H1 (cell line): ENCODE measurements at regions of chr14 and their contacts with region 1.

Region 1: GRCh38 chr14:73295198-73295796 is 58.0 kb downstream of the PAPLN start:
- DNase-seq: no peak
- H3K4me3 ChIP-seq: no peak overlapping the region
- H3K27ac ChIP-seq: no peak overlapping the region
- H3K4me1 ChIP-seq: peaks cover 0 to 3% (median 1%) of the 10 kb centered on the region in 4 experiments; a peak in 2 of 7 replicates
- H3K27me3 ChIP-seq: no peaks in the 10 kb centered on the region
- CTCF ChIP-seq: peak in 2 of 3 experiments; percentile 31 to 65; a peak in 2 of 4 replicates
- EP300 ChIP-seq: no peak
- POLR2A ChIP-seq: no peak
- RAD21 ChIP-seq: peak; percentile 40 to 48

Region 2: GRCh38 chr14:72864712-72865365 is 430.5 kb before region 1 on chr14:
- CTCF ChIA-PET with region 1: no interaction called
- POLR2A ChIA-PET with region 1: no interaction called
- DNase-seq: no peak
- H3K4me3 ChIP-seq: no peak overlapping the region
- H3K27ac ChIP-seq: no peak overlapping the region
- H3K4me1 ChIP-seq: no peaks in the 10 kb centered on the region
- H3K27me3 ChIP-seq: no peaks in the 10 kb centered on the region; a peak in 1 of 7 replicates
- CTCF ChIP-seq: no peak
- EP300 ChIP-seq: no peak
- POLR2A ChIP-seq: no peak
- RAD21 ChIP-seq: no peak

Region 3: DNA sequence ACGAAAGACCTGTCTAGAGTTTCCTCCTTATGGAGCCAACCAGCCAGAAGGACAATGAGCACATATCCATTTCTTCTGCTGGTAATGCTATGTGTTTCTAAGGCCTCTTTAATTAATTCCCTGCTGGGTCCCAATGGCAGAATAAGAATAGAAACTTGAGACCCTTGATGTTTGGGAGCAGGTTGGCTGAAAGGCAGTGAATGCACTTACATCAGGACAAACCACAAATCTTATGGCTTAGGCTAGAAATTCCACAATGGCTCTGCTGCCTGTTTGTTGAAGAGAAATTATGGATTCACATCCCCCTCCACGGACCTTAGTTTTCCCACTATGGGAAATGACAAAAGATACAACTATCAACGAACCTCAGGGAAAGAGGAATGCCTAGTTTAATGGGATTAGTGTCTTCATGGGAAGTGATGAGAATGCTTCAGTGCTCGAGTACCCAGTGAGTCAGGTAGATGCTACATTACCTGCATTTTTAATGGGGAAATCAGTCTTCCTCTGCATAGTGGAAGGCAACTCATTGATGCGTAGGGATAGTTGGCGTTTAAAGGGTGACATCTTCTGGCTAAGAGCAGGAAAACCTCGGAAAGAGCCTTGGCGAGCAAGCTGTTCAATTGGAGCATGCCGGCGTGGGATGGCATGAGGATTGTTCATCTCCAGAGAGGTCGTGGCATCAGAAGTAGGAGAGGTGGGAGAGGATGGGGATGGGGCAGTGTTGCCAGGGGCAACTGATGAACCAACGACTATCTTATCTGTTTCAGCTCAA is 11.5 kb before region 1 on chr14:
- CTCF ChIA-PET with region 1: interaction called, 26 read pairs
- POLR2A ChIA-PET with region 1: interaction called, 8 read pairs
- DNase-seq: peak in 1 of 2 experiments; percentile 44
- H3K4me3 ChIP-seq: peak overlapping the region in 1 of 4 experiments; percentile 8; a peak in 1 of 8 replicates
- H3K27ac ChIP-seq: no peak overlapping the region
- H3K4me1 ChIP-seq: peaks cover 3 to 28% (median 19%) of the 10 kb centered on the region in 4 experiments
- H3K27me3 ChIP-seq: no peaks in the 10 kb centered on the region
- CTCF ChIP-seq: peak; percentile 12 to 75 (median 59)
- EP300 ChIP-seq: no peak
- POLR2A ChIP-seq: no peak
- RAD21 ChIP-seq: peak; percentile 79 to 82

Region 4: GRCh38 chr14:73305499-73305898 is 10.2 kb after region 1 on chr14:
- CTCF ChIA-PET with region 1: interaction called, 11 read pairs
- POLR2A ChIA-PET with region 1: no interaction called
- DNase-seq: no peak
- H3K4me3 ChIP-seq: no peak overlapping the region
- H3K27ac ChIP-seq: no peak overlapping the region
- H3K4me1 ChIP-seq: no peaks in the 10 kb centered on the region
- H3K27me3 ChIP-seq: no peaks in the 10 kb centered on the region
- CTCF ChIP-seq: no peak
- EP300 ChIP-seq: no peak
- POLR2A ChIP-seq: no peak
- RAD21 ChIP-seq: no peak

Region 5: DNA sequence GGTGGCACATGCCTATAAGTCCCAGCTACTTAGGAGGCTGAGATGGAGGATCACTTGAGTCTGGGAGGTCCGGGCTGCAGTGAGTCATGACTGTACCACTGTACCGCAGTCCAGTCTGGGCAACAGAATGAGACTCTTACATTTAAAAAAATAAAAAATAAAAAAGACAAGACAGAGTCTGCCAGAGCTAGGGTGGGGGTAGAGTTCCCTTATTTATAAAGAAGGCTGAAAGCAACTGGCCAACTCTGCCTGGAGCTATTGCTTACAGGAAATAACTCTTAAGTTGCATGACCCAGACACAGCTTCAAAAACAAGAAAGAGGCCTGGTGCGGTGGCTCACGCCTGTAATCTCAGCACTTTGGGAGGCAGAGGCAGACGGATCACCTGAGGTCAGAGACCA is 131.6 kb after region 1 on chr14:
- CTCF ChIA-PET with region 1: no interaction called
- POLR2A ChIA-PET with region 1: no interaction called
- DNase-seq: no peak
- H3K4me3 ChIP-seq: no peak overlapping the region
- H3K27ac ChIP-seq: no peak overlapping the region
- H3K4me1 ChIP-seq: no peaks in the 10 kb centered on the region
- H3K27me3 ChIP-seq: no peaks in the 10 kb centered on the region
- CTCF ChIP-seq: no peak
- EP300 ChIP-seq: no peak
- POLR2A ChIP-seq: no peak
- RAD21 ChIP-seq: no peak

Region 6: DNA sequence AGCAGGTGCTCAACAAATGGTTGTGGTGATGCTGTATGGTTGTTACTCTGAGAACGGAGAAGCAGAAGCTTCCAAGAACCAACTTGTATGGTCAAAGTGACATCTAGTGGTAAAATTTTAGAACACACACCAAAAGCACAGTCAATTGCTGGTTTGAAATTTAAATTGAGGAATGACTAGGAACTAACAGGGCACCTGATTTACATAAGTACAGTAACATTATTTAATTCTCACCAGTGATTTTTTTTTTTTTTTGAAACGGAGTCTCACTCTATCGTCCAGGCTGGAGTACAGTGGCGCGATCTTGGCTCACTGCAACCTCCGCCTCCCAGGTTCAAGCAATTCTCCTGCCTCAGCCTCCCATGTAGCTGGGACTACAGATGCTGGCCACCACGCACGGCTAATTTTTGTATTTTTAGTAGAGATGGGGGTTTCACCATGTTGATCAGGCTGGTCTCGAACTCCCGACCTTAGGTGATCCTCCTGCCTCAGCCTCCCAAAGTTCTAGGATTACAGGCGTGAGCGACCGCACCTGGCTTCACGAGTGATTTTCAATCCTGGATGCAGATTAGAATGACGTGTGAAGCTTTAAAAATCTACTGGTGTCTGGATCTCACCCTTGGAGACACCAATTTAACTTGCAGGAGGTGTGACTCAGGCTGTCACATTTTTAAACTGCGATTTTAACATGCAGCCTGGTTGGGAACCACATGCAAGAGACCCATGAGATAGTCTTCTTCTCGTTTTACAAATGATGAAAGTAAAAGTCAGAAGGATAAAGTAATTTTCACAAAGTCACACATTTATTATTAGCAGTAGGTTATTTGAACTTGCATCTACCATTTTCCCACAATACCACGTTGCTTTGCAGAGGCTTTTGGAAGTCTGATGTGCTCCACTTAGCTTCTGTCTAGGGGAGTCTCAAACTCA is 177.2 kb after region 1 on chr14:
- CTCF ChIA-PET with region 1: interaction called, 34 read pairs
- POLR2A ChIA-PET with region 1: interaction called, 8 read pairs
- DNase-seq: no peak
- H3K4me3 ChIP-seq: no peak overlapping the region
- H3K27ac ChIP-seq: no peak overlapping the region
- H3K4me1 ChIP-seq: no peaks in the 10 kb centered on the region
- H3K27me3 ChIP-seq: no peaks in the 10 kb centered on the region
- CTCF ChIP-seq: peak in 2 of 3 experiments; percentile 67 to 78; a peak in 3 of 4 replicates
- EP300 ChIP-seq: no peak
- POLR2A ChIP-seq: no peak
- RAD21 ChIP-seq: peak; percentile 95 to 96